Activated B cell treated with CpG ODN at 0.5 μM for 24 hours (primary cell): ENCODE measurements at regions of chr12 and their contacts with region 1.

Region 1: DNA sequence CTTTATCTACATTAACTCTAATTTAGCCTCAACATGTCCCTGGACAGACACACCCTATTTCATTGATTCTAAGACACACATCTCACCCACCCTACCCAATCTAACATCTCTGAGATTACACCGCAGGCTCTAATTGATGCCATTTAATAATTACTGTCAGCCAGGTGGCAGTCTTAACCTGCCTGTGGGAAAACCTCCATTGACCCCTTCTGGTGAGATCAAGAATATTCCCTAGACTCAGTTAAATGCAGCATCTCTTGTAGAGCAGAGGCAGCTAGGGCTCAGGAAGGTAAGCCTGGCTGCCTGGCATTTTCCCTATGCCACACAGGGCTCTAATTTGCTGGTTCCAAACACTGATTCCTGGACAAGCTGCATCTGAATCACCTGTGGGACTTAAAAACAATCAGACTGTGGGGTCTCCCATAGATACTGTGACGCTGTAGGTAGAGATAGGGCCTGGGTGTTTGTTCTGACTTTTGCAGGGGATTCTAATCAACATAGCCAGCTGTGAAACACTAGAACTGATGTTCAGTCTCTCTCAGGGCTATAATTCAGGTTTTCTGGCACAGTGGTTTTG is 14.3 kb downstream of the MCRS1 start:
- DNase-seq: no peak
- ATAC-seq: peak; percentile 65
- H3K4me3 Mint-ChIP-seq: no peak overlapping the region
- H3K27ac Mint-ChIP-seq: no peak overlapping the region
- H3K4me1 Mint-ChIP-seq: peaks cover 4% of the 10 kb centered on the region
- H3K27me3 Mint-ChIP-seq: peaks cover 13% of the 10 kb centered on the region
- CTCF ChIP-seq: no peak

Region 2: GRCh38 chr12:49274396-49275286 is 279.0 kb before region 1 on chr12:
- CTCF ChIA-PET with region 1: no interaction called
- POLR2A ChIA-PET with region 1: no interaction called
- intact Hi-C with region 1: no loop called
- DNase-seq: no peak
- ATAC-seq: no peak
- H3K4me3 Mint-ChIP-seq: no peak overlapping the region
- H3K27ac Mint-ChIP-seq: no peak overlapping the region
- H3K4me1 Mint-ChIP-seq: no peaks in the 10 kb centered on the region
- H3K27me3 Mint-ChIP-seq: no peaks in the 10 kb centered on the region
- CTCF ChIP-seq: no peak

Region 3: GRCh38 chr12:49538510-49539403 is 14.8 kb before region 1 on chr12 and contains the start of gene KCNH3:
- CTCF ChIA-PET with region 1: interaction called, 4 read pairs
- POLR2A ChIA-PET with region 1: no interaction called
- intact Hi-C with region 1: loop called (anchors 1 kb)
- DNase-seq: peak; percentile 63
- ATAC-seq: peak; percentile 86
- H3K4me3 Mint-ChIP-seq: peak within 1 kb of the TSS; percentile 79
- H3K27ac Mint-ChIP-seq: no peak within 1 kb of the TSS
- H3K4me1 Mint-ChIP-seq: peaks cover 43% of the 10 kb centered on the region
- H3K27me3 Mint-ChIP-seq: peaks cover 28% of the 10 kb centered on the region
- CTCF ChIP-seq: no peak
- total RNA-seq, gene KCNH3: 0.27 and 0.44 TPM in 2 replicates